GM10248 (cell line): ENCODE measurements at regions of chr1 and their contacts with region 1.

Region 1: GRCh38 chr1:111755331-111756123 is at the start of gene DDX20:
- DNase-seq: peak; percentile 98
- CTCF ChIP-seq: peak; percentile 91

Region 2: DNA sequence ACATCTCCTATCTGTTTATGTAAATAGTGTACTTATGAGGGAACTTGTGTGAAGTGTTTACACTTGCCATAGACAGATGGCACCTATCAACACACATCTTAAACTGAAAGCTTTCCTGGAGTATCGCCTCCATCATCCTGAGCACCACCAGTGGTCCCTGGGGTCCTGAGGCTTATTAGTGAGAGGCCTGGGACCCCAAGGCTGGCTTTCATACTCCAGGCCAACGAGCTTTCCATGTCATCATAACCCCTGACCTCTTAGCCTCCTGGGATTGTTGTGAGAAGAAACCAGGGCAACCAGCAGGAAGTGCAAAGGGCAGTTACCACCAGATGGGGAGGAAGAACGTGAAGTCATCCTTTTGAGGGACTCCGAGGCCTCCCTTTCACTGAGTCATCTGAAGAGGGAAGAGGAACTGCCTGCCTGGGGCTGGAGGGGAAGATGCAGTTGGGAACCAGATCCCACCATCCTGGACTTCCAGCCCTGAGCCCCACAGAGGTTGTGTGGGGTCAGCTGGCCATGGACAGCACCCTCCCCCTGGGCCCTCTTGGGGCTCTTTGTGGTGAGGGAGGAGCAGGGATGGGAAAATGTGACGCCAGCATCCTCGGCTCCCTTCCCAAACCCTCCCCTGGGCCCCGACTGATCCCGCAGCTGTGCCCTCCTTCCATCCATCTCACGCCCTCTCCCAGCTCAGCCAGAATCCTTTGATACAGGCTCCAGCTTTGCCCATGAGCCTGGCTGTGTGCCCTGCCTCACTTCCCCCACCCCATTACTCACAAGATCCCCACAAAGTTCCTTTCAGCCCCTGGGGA is 22.1 kb before region 1 on chr1:
- CTCF ChIA-PET with region 1: interaction called, 20 read pairs
- POLR2A ChIA-PET with region 1: interaction called, 4 read pairs
- DNase-seq: no peak
- CTCF ChIP-seq: no peak

Region 3: DNA sequence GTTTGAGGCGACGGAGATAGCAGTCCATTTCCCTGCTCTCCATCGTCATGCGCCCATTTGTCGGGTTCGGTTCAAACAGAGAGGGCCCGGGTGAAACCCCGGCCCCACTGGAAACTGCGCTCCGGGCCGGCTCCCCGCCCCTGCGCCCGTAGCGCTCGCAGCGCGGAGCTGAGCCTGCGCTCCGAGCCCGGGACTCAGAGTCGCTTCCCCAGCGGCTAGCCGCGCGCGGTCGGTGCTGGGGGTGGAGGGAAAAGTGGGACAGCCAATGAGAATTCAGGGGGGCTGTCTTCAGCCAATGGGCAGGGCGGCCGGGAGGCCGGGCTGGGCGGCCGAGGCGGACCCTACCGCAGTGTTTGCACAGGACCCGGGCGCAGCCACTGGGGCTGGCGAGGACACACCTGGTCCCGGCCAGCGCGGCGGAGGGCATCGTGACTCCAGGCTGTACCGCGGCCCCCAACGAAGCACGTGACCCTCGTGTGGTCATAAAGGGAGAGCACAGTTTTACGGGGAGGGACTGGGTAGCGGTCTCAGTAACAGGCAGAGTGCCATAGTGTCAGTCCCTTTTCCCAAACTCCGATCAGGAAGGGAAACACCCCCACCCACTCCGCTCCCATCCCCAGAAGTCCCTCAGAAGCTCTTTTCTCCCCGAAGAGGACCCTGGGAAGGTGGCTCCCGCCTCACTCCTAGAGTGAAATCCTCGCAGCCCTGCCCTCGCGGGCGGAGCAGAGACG is 16.2 kb before region 1 on chr1 and contains the start of gene INKA2:
- CTCF ChIA-PET with region 1: interaction called, 24 read pairs
- POLR2A ChIA-PET with region 1: interaction called, 4 read pairs
- DNase-seq: peak; percentile 94
- CTCF ChIP-seq: no peak